PC-3 (cell line): ENCODE measurements at regions of chr3 and their contacts with region 1.

Region 1: GRCh38 chr3:139310474-139310933 is 33.3 kb upstream of the MRPS22 start:
- DNase-seq: peak; percentile 89
- ATAC-seq: peak; percentile 79
- H3K4me3 ChIP-seq: peak overlapping the region; percentile 30; the same call in 1 of the 2 replicates
- H3K27ac ChIP-seq: peak overlapping the region; percentile 82
- H3K4me1 ChIP-seq: peaks cover 56% of the 10 kb centered on the region
- H3K27me3 ChIP-seq: no peaks in the 10 kb centered on the region
- CTCF ChIP-seq: no peak

Region 2: GRCh38 chr3:139117136-139117675 is 193.3 kb before region 1 on chr3:
- CTCF ChIA-PET with region 1: no interaction called
- POLR2A ChIA-PET with region 1: no interaction called
- intact Hi-C with region 1: loop called (anchors 2 kb)
- DNase-seq: peak; percentile 82
- ATAC-seq: peak; percentile 94
- H3K4me3 ChIP-seq: no peak overlapping the region
- H3K27ac ChIP-seq: peak overlapping the region; percentile 71
- H3K4me1 ChIP-seq: peaks cover 12% of the 10 kb centered on the region
- H3K27me3 ChIP-seq: no peaks in the 10 kb centered on the region
- CTCF ChIP-seq: no peak

Region 3: GRCh38 chr3:139355476-139355875 is 45.0 kb after region 1 on chr3:
- CTCF ChIA-PET with region 1: no interaction called
- POLR2A ChIA-PET with region 1: no interaction called
- intact Hi-C with region 1: no loop called
- DNase-seq: no peak
- ATAC-seq: no peak
- H3K4me3 ChIP-seq: no peak overlapping the region
- H3K27ac ChIP-seq: no peak overlapping the region
- H3K4me1 ChIP-seq: no peaks in the 10 kb centered on the region
- H3K27me3 ChIP-seq: no peaks in the 10 kb centered on the region
- CTCF ChIP-seq: no peak